HCT116 (cell line): ENCODE measurements at regions of chr11 and their contacts with region 1.

Region 1: DNA sequence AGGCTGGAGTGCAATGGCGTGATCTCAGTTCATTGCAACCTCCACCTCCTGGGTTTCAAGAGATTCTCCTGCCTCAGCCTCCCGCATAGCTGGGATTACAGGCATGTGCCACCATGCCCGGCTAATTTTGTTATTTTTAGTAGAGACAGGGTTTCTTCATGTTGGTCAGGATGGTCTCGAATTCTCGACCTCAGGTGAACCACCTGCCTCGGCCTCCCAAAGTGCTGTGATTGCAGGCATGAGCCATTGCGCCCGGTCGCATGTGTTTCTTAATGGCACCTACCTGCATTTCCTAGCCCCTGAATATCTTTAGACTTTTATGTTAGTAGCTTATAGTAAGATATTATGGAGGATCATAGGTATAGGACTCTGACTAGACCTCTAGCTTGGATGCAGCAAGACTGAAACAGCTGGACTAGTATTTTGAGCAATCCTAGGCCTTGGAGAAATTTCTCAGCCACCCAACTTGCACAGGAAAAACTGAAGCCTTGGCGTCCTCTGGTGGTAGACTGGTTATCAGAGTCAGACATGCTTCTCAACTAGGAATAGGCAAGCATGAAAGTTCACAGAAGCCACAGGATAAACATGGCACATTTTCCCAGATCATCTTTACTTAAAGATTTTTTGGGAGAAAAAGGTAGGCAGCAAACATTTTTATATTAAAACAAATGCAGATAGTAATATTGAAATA is 22.7 kb upstream of the C1QTNF4 start:
- DNase-seq: peak; percentile 21
- ATAC-seq: peak; percentile 75
- H3K4me3 ChIP-seq: no peak overlapping the region
- H3K27ac ChIP-seq: no peak overlapping the region
- H3K4me1 ChIP-seq: no peaks in the 10 kb centered on the region
- H3K27me3 ChIP-seq: no peaks in the 10 kb centered on the region
- CTCF ChIP-seq: peak; percentile 61 to 69 (median 69); a peak in 5 of 6 replicates
- POLR2A ChIP-seq: no peak
- RAD21 ChIP-seq: peak; percentile 78

Region 2: GRCh38 chr11:47466701-47467250 is 150.1 kb before region 1 on chr11:
- CTCF ChIA-PET with region 1: no interaction called
- POLR2A ChIA-PET with region 1: no interaction called
- RAD21 ChIA-PET with region 1: no interaction called
- intact Hi-C with region 1: loop called (anchors 10 kb)
- DNase-seq: no peak
- ATAC-seq: peak; percentile 44
- H3K4me3 ChIP-seq: no peak overlapping the region
- H3K27ac ChIP-seq: no peak overlapping the region
- H3K4me1 ChIP-seq: peaks cover 0 to 4% of the 10 kb centered on the region in 2 experiments; a peak in 1 of 4 replicates
- H3K27me3 ChIP-seq: no peaks in the 10 kb centered on the region
- CTCF ChIP-seq: no peak
- POLR2A ChIP-seq: no peak
- RAD21 ChIP-seq: no peak